B cell (primary cell): ENCODE measurements at regions of chr6 and their contacts with region 1.

Region 1: GRCh38 chr6:111011360-111012142 is 29.7 kb downstream of the RPF2 start:
- DNase-seq: peak; percentile 56
- ATAC-seq: peak; percentile 56
- H3K4me3 ChIP-seq: no peak overlapping the region
- H3K4me3 Mint-ChIP-seq: no peak overlapping the region
- H3K27ac ChIP-seq: peak overlapping the region in 1 of 2 donors; percentile 44
- H3K27ac Mint-ChIP-seq: no peak overlapping the region
- H3K4me1 ChIP-seq: peaks cover 0 to 2% of the 10 kb centered on the region in 2 donors
- H3K4me1 Mint-ChIP-seq: peaks cover 4% of the 10 kb centered on the region
- H3K27me3 ChIP-seq: no peaks in the 10 kb centered on the region
- H3K27me3 Mint-ChIP-seq: no peaks in the 10 kb centered on the region
- CTCF ChIP-seq: peak; percentile 75

Region 2: GRCh38 chr6:110999634-111000270 is 11.8 kb before region 1 on chr6:
- CTCF ChIA-PET with region 1: interaction called, 10 read pairs
- POLR2A ChIA-PET with region 1: no interaction called
- intact Hi-C with region 1: no loop called
- DNase-seq: peak; percentile 42
- ATAC-seq: no peak
- H3K4me3 ChIP-seq: no peak overlapping the region
- H3K4me3 Mint-ChIP-seq: no peak overlapping the region
- H3K27ac ChIP-seq: no peak overlapping the region
- H3K27ac Mint-ChIP-seq: no peak overlapping the region
- H3K4me1 ChIP-seq: no peaks in the 10 kb centered on the region
- H3K4me1 Mint-ChIP-seq: no peaks in the 10 kb centered on the region
- H3K27me3 ChIP-seq: no peaks in the 10 kb centered on the region
- H3K27me3 Mint-ChIP-seq: no peaks in the 10 kb centered on the region
- CTCF ChIP-seq: peak; percentile 65

Region 3: GRCh38 chr6:111027219-111027618 is 15.7 kb after region 1 on chr6:
- CTCF ChIA-PET with region 1: interaction called, 11 read pairs
- POLR2A ChIA-PET with region 1: no interaction called
- intact Hi-C with region 1: no loop called
- DNase-seq: no peak
- ATAC-seq: no peak
- H3K4me3 ChIP-seq: no peak overlapping the region
- H3K4me3 Mint-ChIP-seq: no peak overlapping the region
- H3K27ac ChIP-seq: no peak overlapping the region
- H3K27ac Mint-ChIP-seq: no peak overlapping the region
- H3K4me1 ChIP-seq: no peaks in the 10 kb centered on the region
- H3K4me1 Mint-ChIP-seq: no peaks in the 10 kb centered on the region
- H3K27me3 ChIP-seq: no peaks in the 10 kb centered on the region
- H3K27me3 Mint-ChIP-seq: no peaks in the 10 kb centered on the region
- CTCF ChIP-seq: no peak

Region 4: DNA sequence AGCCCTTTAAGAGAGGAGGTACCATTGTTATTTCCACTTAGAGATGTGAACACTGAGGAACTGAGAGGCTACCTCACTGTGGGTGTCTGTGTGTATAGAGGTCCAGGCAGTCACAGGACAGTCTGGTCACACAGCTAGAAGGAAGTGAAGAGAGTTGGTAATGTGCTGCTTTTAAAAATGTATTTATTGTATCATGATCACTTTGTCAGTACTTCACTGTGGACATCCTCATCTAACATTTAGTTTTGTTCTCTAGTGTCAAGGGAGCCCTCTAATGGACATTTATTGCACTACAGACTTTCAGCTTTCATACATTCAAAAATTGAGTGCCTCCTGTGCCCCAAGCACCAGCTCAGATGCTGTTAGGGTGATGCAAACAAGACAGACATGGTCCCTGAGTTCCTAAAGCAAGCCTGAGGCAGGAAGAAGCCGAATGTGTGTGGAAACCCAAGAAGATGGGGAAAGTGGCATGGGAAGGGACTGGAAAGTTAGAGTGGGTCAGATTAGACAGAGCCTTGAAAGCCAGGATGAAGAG is 198.7 kb after region 1 on chr6:
- CTCF ChIA-PET with region 1: interaction called, 30 read pairs
- POLR2A ChIA-PET with region 1: no interaction called
- intact Hi-C with region 1: loop called (anchors 1 kb)
- DNase-seq: peak; percentile 69
- ATAC-seq: peak; percentile 53
- H3K4me3 ChIP-seq: no peak overlapping the region
- H3K4me3 Mint-ChIP-seq: no peak overlapping the region
- H3K27ac ChIP-seq: no peak overlapping the region
- H3K27ac Mint-ChIP-seq: no peak overlapping the region
- H3K4me1 ChIP-seq: no peaks in the 10 kb centered on the region
- H3K4me1 Mint-ChIP-seq: no peaks in the 10 kb centered on the region
- H3K27me3 ChIP-seq: no peaks in the 10 kb centered on the region
- H3K27me3 Mint-ChIP-seq: no peaks in the 10 kb centered on the region
- CTCF ChIP-seq: peak; percentile 84

Region 5: GRCh38 chr6:112163295-112164257 is 1152.0 kb after region 1 on chr6:
- CTCF ChIA-PET with region 1: no interaction called
- POLR2A ChIA-PET with region 1: no interaction called
- intact Hi-C with region 1: loop called (anchors 5 kb)
- DNase-seq: peak; percentile 75
- ATAC-seq: peak; percentile 96
- H3K4me3 ChIP-seq: no peak overlapping the region
- H3K4me3 Mint-ChIP-seq: no peak overlapping the region
- H3K27ac ChIP-seq: no peak overlapping the region
- H3K27ac Mint-ChIP-seq: no peak overlapping the region
- H3K4me1 ChIP-seq: peaks cover 9% of the 10 kb centered on the region in 2 donors
- H3K4me1 Mint-ChIP-seq: peaks cover 12% of the 10 kb centered on the region
- H3K27me3 ChIP-seq: peaks cover 0 to 22% (median 13%) of the 10 kb centered on the region in 4 experiments
- H3K27me3 Mint-ChIP-seq: peaks cover 53% of the 10 kb centered on the region
- CTCF ChIP-seq: peak; percentile 99